CD8-positive, alpha-beta memory T cell (primary cell): ENCODE measurements at regions of chr7 and their contacts with region 1.

Region 1: GRCh38 chr7:140263277-140263676 is 86.5 kb upstream of the KDM7A start:
- DNase-seq: peak in 3 of 5 donors; percentile 67 to 75 (median 75)
- H3K4me3 ChIP-seq: peak overlapping the region; percentile 11
- H3K4me3 Mint-ChIP-seq: peak overlapping the region; percentile 1 to 89 (median 63)
- H3K27ac ChIP-seq: no peak overlapping the region
- H3K27ac Mint-ChIP-seq: peak overlapping the region; percentile 80 to 97 (median 93)
- H3K4me1 ChIP-seq: peaks cover 42% of the 10 kb centered on the region
- H3K4me1 Mint-ChIP-seq: peaks cover 34 to 51% (median 49%) of the 10 kb centered on the region in 3 donors
- H3K27me3 ChIP-seq: no peaks in the 10 kb centered on the region
- H3K27me3 Mint-ChIP-seq: peaks cover 0 to 3% of the 10 kb centered on the region in 2 donors

Region 2: DNA sequence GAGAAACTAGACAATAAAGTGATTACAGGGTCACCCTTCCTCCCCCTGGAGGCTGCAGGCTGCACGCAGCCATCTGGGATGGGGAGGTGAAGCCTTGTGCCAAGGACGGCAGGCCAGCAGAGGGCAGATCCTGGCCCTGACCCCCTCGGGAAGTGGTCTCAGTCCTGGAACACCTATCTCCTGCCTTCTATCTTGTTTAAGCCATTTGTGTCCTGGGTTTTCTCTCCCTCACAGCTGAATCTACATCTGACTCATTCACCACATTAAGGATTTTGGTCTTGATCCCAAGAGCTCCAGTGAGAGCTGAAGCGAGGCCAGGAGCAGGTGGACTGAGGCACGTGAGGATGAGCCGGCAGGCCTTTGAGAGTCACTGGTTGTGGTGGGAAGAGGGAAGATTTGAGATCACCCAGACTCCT is 184.1 kb before region 1 on chr7:
- CTCF ChIA-PET with region 1: no interaction called
- POLR2A ChIA-PET with region 1: no interaction called
- DNase-seq: no peak
- H3K4me3 ChIP-seq: no peak overlapping the region
- H3K4me3 Mint-ChIP-seq: no peak overlapping the region
- H3K27ac ChIP-seq: no peak overlapping the region
- H3K27ac Mint-ChIP-seq: no peak overlapping the region
- H3K4me1 ChIP-seq: peaks cover 4% of the 10 kb centered on the region
- H3K4me1 Mint-ChIP-seq: peaks cover 8 to 17% (median 12%) of the 10 kb centered on the region in 3 donors
- H3K27me3 ChIP-seq: no peaks in the 10 kb centered on the region
- H3K27me3 Mint-ChIP-seq: peaks cover 3 to 4% of the 10 kb centered on the region in 2 donors

Region 3: GRCh38 chr7:140249036-140249806 is 14.1 kb before region 1 on chr7:
- CTCF ChIA-PET with region 1: interaction called, 12 read pairs
- POLR2A ChIA-PET with region 1: interaction called, 7 read pairs
- DNase-seq: no peak
- H3K4me3 ChIP-seq: no peak overlapping the region
- H3K4me3 Mint-ChIP-seq: no peak overlapping the region
- H3K27ac ChIP-seq: no peak overlapping the region
- H3K27ac Mint-ChIP-seq: peak overlapping the region in 2 of 8 donors; percentile 44 to 86
- H3K4me1 ChIP-seq: peaks cover 22% of the 10 kb centered on the region
- H3K4me1 Mint-ChIP-seq: peaks cover 19 to 26% (median 22%) of the 10 kb centered on the region in 3 donors
- H3K27me3 ChIP-seq: no peaks in the 10 kb centered on the region
- H3K27me3 Mint-ChIP-seq: peaks cover 2 to 3% of the 10 kb centered on the region in 2 donors

Region 4: GRCh38 chr7:140292438-140292837 is 29.2 kb after region 1 on chr7:
- CTCF ChIA-PET with region 1: no interaction called
- POLR2A ChIA-PET with region 1: no interaction called
- DNase-seq: no peak
- H3K4me3 ChIP-seq: no peak overlapping the region
- H3K4me3 Mint-ChIP-seq: no peak overlapping the region
- H3K27ac ChIP-seq: no peak overlapping the region
- H3K27ac Mint-ChIP-seq: no peak overlapping the region
- H3K4me1 ChIP-seq: no peaks in the 10 kb centered on the region
- H3K4me1 Mint-ChIP-seq: peaks cover 0 to 3% (median 0%) of the 10 kb centered on the region in 3 donors
- H3K27me3 ChIP-seq: no peaks in the 10 kb centered on the region
- H3K27me3 Mint-ChIP-seq: peaks cover 3% of the 10 kb centered on the region in 2 donors

Region 5: GRCh38 chr7:140525743-140526142 is 262.5 kb after region 1 on chr7:
- CTCF ChIA-PET with region 1: no interaction called
- POLR2A ChIA-PET with region 1: no interaction called
- DNase-seq: peak; percentile 5 to 53 (median 10)
- H3K4me3 ChIP-seq: no peak overlapping the region
- H3K4me3 Mint-ChIP-seq: peak overlapping the region in 6 of 7 donors; percentile 41 to 66 (median 49)
- H3K27ac ChIP-seq: no peak overlapping the region
- H3K27ac Mint-ChIP-seq: peak overlapping the region in 7 of 8 donors; percentile 8 to 82 (median 80)
- H3K4me1 ChIP-seq: peaks cover 14% of the 10 kb centered on the region
- H3K4me1 Mint-ChIP-seq: peaks cover 18 to 34% (median 29%) of the 10 kb centered on the region in 3 donors
- H3K27me3 ChIP-seq: no peaks in the 10 kb centered on the region
- H3K27me3 Mint-ChIP-seq: peaks cover 0 to 4% of the 10 kb centered on the region in 2 donors